ENCODE measurements at regions of chr18 and their contacts with region 1.

Region 1: GRCh38 chr18:72762515-72763122 is 105.2 kb downstream of the NETO1 start:
- DNase-seq: no peak
- ATAC-seq: no peak
- H3K4me3 ChIP-seq: no peak overlapping the region
- H3K27ac ChIP-seq: no peak overlapping the region
- H3K4me1 ChIP-seq: no peaks in the 10 kb centered on the region
- H3K27me3 ChIP-seq: no peaks in the 10 kb centered on the region
- CTCF ChIP-seq: peak in 2 of 5 experiments; percentile 52 to 56
- POLR2A ChIP-seq: no peak

Region 2: GRCh38 chr18:73842795-73843394 is 1080.3 kb after region 1 on chr18:
- in situ Hi-C with region 1: loop called in 1 of 4 experiments (anchors 25 kb)
- intact Hi-C with region 1: loop called (anchors 5 kb)
- DNase-seq: no peak
- ATAC-seq: no peak
- H3K4me3 ChIP-seq: peak overlapping the region in 1 of 4 donors; percentile 3
- H3K27ac ChIP-seq: no peak overlapping the region
- H3K4me1 ChIP-seq: peaks cover 0 to 5% of the 10 kb centered on the region in 2 donors
- H3K27me3 ChIP-seq: peaks cover 0 to 4% (median 0%) of the 10 kb centered on the region in 3 donors
- CTCF ChIP-seq: peak in 3 of 5 experiments; percentile 48 to 76 (median 76)
- POLR2A ChIP-seq: no peak

Region 3: DNA sequence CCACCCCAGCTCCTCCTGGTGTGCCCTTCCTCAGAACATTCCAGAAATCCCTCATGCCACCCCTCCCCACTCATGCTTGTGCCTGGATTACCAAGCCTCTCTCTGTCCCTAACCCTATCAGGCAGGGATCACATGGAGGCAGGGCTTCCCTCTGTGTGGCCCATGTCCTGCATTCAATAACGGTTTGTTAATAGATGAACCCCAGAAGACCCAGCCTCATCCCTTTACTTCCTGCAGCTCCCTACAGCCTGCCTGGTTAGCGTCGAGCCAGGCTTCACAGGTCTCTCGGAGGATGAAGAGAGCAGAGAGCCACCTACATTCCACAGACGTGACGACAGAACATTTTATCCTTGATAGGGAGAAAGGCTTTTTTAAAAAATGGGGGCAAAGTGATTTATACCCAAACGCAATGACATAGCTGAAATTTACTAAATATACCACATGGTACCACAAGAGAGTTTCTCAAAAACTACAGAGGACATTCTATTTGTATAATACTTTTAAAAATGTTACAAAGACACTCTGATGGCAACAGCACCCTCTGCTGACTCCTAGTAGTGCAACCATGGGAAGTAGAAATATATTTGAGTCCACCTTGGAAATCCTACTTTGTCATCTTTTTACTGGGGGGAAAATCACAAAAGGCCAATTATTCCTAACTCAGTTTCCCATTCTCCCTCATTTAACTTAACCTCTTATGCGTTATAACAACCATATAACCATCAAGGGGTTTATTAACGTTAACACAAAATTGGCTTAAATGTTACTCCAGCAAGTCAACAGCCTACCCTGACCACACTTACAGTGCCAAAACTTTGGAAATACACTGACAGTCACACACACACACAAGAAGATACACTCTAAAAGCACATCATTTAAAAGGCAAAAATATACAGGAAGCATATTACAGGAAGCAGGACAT is 1354.3 kb after region 1 on chr18:
- in situ Hi-C with region 1: no loop called
- intact Hi-C with region 1: loop called (anchors 5 kb)
- DNase-seq: no peak
- ATAC-seq: no peak
- H3K4me3 ChIP-seq: no peak overlapping the region
- H3K27ac ChIP-seq: no peak overlapping the region
- H3K4me1 ChIP-seq: no peaks in the 10 kb centered on the region
- H3K27me3 ChIP-seq: no peaks in the 10 kb centered on the region
- CTCF ChIP-seq: peak in 1 of 5 experiments; percentile 7
- POLR2A ChIP-seq: no peak